Heart right ventricle (tissue), 16 donors: ENCODE measurements at regions of chr4 and their contacts with region 1.

Region 1: DNA sequence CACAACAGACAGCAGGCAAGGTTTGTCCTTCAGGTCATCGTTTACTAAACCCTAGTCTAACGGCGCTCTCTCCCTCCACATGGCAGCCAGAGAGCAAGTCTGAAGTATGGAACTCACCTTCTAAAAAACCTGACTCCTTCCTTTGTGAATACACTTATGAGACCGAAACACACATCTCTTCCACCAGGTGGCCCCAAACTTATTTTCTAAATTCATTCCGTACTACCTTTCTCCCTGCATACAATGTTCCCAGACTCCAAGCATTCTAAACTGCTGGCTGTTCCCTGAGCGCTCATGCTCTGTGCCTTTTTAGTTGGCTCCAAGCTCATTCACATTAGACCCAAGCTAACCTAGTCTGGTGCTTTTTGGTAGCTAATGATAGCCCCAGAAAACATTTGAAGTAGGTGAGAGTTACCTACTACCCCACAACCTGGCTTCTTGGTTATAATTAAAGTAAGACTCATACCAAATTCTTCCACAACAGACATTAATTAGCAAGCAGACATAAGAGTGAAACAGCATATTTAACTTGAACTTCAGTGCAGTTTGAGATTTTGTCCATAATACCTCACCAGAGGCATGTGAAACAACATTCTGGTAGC is 67.6 kb upstream of the DCLK2 start:
- DNase-seq: peak in 1 of 2 donors; percentile 38
- ATAC-seq: peak; percentile 67 to 93 (median 86)
- H3K4me3 ChIP-seq: no peak overlapping the region
- H3K27ac ChIP-seq: no peak overlapping the region
- H3K4me1 ChIP-seq: peaks cover 0 to 19% (median 8%) of the 10 kb centered on the region in 9 donors
- H3K27me3 ChIP-seq: no peaks in the 10 kb centered on the region
- CTCF ChIP-seq: peak; percentile 24 to 75 (median 60)

Region 2: GRCh38 chr4:150063128-150063527 is 52.5 kb after region 1 on chr4:
- intact Hi-C with region 1: loop called in 1 of 10 experiments (anchors 10 kb)
- DNase-seq: no peak
- ATAC-seq: peak in 5 of 8 donors; percentile 39 to 86 (median 67)
- H3K4me3 ChIP-seq: no peak overlapping the region
- H3K27ac ChIP-seq: peak overlapping the region in 5 of 10 donors; percentile 1 to 59 (median 53)
- H3K4me1 ChIP-seq: peaks cover 3 to 27% (median 22%) of the 10 kb centered on the region in 9 donors
- H3K27me3 ChIP-seq: no peaks in the 10 kb centered on the region
- CTCF ChIP-seq: no peak

Region 3: DNA sequence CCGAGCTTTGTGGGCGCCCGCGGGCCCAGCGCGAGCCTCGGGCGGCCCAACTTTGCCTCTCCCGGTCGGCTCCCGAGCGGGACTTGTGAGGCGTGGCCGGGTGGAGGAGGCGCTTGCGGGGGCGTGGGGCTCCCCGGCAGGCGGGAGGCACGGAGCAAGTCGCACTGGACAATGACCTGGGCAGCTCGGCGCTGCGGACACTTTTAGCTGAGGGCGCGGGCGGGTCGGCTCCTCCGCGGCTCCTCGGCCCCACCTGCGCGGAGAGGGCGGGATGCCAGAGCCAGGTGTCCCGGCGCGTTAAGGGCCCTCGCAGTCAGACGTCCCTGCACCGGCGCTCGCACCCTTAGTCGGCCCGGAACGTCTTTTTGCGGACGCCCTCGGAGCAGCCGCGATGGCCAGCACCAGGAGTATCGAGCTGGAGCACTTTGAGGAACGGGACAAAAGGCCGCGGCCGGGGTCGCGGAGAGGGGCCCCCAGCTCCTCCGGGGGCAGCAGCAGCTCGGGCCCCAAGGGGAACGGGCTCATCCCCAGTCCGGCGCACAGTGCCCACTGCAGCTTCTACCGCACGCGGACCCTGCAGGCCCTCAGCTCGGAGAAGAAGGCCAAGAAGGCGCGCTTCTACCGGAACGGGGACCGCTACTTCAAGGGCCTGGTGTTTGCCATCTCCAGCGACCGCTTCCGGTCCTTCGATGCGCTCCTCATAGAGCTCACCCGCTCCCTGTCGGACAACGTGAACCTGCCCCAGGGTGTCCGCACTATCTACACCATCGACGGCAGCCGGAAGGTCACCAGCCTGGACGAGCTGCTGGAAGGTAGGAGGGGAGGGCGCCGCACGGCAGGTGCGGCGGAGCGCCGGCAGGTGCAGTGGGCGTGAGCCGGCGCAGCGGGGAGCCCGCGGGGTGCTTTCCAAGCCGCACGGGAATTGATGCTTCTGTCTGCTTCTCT is 68.3 kb after region 1 on chr4:
- intact Hi-C with region 1: loop called in 4 of 10 experiments (anchors 5 to 10 kb)
- DNase-seq: peak; percentile 62 to 73
- ATAC-seq: peak; percentile 58 to 79 (median 72)
- H3K4me3 ChIP-seq: peak overlapping the region; percentile 69 to 93 (median 74)
- H3K27ac ChIP-seq: peak overlapping the region; percentile 81 to 96 (median 90)
- H3K4me1 ChIP-seq: peaks cover 0 to 49% (median 24%) of the 10 kb centered on the region in 9 donors
- H3K27me3 ChIP-seq: peaks cover 0 to 40% (median 0%) of the 10 kb centered on the region in 7 donors
- CTCF ChIP-seq: peak in 3 of 9 donors; percentile 31 to 43 (median 34)

Region 4: GRCh38 chr4:150209140-150209829 is 198.7 kb after region 1 on chr4:
- intact Hi-C with region 1: loop called (anchors 1 to 10 kb)
- DNase-seq: peak; percentile 60 to 73
- ATAC-seq: peak; percentile 70 to 86 (median 80)
- H3K4me3 ChIP-seq: no peak overlapping the region
- H3K27ac ChIP-seq: peak overlapping the region in 1 of 10 donors; percentile 21
- H3K4me1 ChIP-seq: peaks cover 0 to 66% (median 32%) of the 10 kb centered on the region in 9 donors
- H3K27me3 ChIP-seq: no peaks in the 10 kb centered on the region
- CTCF ChIP-seq: peak; percentile 23 to 76 (median 67)

Region 5: GRCh38 chr4:150217192-150217591 is 206.6 kb after region 1 on chr4:
- intact Hi-C with region 1: loop called in 2 of 10 experiments (anchors 10 kb)
- DNase-seq: no peak
- ATAC-seq: peak in 7 of 8 donors; percentile 34 to 77 (median 71)
- H3K4me3 ChIP-seq: no peak overlapping the region
- H3K27ac ChIP-seq: no peak overlapping the region
- H3K4me1 ChIP-seq: peaks cover 0 to 26% (median 9%) of the 10 kb centered on the region in 9 donors
- H3K27me3 ChIP-seq: no peaks in the 10 kb centered on the region
- CTCF ChIP-seq: peak in 7 of 9 donors; percentile 11 to 52 (median 36)

Region 6: DNA sequence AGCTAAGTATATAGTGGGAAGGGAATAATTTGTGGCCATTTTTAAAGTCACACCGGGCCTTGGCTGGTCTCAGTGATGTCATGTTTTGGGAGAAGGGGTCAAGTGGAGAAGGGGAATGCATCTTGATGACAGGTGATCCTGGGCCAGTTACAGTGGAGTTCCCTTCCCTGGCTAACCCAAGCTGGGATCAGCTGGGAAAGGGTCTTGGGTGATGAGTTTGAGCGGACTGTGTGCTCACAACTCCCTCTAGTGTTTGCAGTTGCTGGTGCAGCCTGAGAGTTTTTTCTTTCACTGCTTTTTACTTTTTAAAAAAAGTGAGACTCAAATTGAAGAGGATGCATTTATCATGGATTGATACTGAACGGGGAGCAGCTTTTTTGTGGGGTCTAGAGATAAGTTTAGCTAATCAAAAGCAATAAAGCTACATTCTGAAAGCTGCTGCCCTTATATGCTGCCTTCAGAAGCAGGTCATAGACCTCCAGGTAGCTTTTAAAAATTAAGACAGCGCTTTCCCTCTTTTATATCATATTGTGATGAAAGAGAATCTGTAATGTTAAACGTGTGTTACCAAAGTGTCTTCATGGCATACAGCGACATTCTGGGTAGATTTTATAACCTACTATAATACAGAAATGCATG is 232.3 kb after region 1 on chr4:
- intact Hi-C with region 1: loop called in 7 of 10 experiments (anchors 1 to 10 kb)
- DNase-seq: peak in 1 of 2 donors; percentile 25
- ATAC-seq: peak in 6 of 8 donors; percentile 11 to 63 (median 50)
- H3K4me3 ChIP-seq: no peak overlapping the region
- H3K27ac ChIP-seq: no peak overlapping the region
- H3K4me1 ChIP-seq: no peaks in the 10 kb centered on the region
- H3K27me3 ChIP-seq: no peaks in the 10 kb centered on the region
- CTCF ChIP-seq: peak; percentile 82 to 94 (median 90)